Activated CD8-positive, alpha-beta T cell treated with anti-CD3 and anti-CD28 coated beads for 36 hours (primary cell): ENCODE measurements at regions of chr5 and their contacts with region 1.

Region 1: GRCh38 chr5:132394667-132395259 is 25.3 kb downstream of the SLC22A5 start:
- DNase-seq: no peak
- ATAC-seq: no peak
- H3K4me3 Mint-ChIP-seq: no peak overlapping the region
- H3K27ac Mint-ChIP-seq: no peak overlapping the region
- H3K4me1 Mint-ChIP-seq: peaks cover 55% of the 10 kb centered on the region
- H3K27me3 Mint-ChIP-seq: no peaks in the 10 kb centered on the region
- CTCF ChIP-seq: no peak

Region 2: GRCh38 chr5:132327252-132327955 is 67.4 kb before region 1 on chr5:
- CTCF ChIA-PET with region 1: no interaction called
- POLR2A ChIA-PET with region 1: no interaction called
- intact Hi-C with region 1: no loop called
- DNase-seq: no peak
- ATAC-seq: no peak
- H3K4me3 Mint-ChIP-seq: no peak overlapping the region
- H3K27ac Mint-ChIP-seq: no peak overlapping the region
- H3K4me1 Mint-ChIP-seq: no peaks in the 10 kb centered on the region
- H3K27me3 Mint-ChIP-seq: no peaks in the 10 kb centered on the region
- CTCF ChIP-seq: no peak

Region 3: DNA sequence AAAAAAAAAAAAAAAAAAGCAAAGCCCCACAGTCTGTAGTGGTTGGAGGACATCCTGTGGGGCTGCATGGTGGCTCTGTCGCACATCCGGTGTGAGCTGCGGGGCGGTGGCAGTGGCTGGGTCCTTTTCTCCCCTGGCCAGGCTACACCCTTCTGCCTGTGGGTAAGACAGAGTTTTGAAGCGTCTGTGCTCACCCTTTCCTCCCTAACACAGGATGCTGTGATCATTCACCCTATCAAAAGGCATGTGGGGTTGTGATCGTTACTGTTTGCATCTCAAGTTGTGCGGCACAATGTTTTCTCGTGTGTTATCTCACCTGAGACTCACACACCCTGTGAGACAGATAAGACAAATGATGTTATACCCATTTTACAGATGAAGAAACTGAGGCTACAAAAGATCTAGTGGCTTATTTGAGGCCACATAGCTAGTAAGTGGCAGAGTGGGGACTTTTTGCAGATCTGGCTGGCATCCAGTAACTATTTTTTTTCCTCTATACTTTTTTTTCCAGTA is 78.3 kb after region 1 on chr5:
- CTCF ChIA-PET with region 1: interaction called, 3 read pairs
- POLR2A ChIA-PET with region 1: interaction called, 68 read pairs
- intact Hi-C with region 1: no loop called
- DNase-seq: peak; percentile 91
- ATAC-seq: peak; percentile 94
- H3K4me3 Mint-ChIP-seq: no peak overlapping the region
- H3K27ac Mint-ChIP-seq: peak overlapping the region; percentile 78
- H3K4me1 Mint-ChIP-seq: peaks cover 72% of the 10 kb centered on the region
- H3K27me3 Mint-ChIP-seq: no peaks in the 10 kb centered on the region
- CTCF ChIP-seq: no peak